ENCODE measurements at regions of chrX and their contacts with region 1.

Region 1: GRCh38 chrX:100768679-100769338 is 36.9 kb upstream of the SYTL4 start:
- DNase-seq: peak; percentile 42
- H3K27ac ChIP-seq: no peak overlapping the region
- CTCF ChIP-seq: peak; percentile 92

Region 2: GRCh38 chrX:100672966-100673365 is 95.8 kb before region 1 on chrX:
- CTCF ChIA-PET with region 1: interaction called, 24 read pairs
- POLR2A ChIA-PET with region 1: no interaction called
- DNase-seq: no peak
- H3K27ac ChIP-seq: no peak overlapping the region
- CTCF ChIP-seq: no peak

Region 3: DNA sequence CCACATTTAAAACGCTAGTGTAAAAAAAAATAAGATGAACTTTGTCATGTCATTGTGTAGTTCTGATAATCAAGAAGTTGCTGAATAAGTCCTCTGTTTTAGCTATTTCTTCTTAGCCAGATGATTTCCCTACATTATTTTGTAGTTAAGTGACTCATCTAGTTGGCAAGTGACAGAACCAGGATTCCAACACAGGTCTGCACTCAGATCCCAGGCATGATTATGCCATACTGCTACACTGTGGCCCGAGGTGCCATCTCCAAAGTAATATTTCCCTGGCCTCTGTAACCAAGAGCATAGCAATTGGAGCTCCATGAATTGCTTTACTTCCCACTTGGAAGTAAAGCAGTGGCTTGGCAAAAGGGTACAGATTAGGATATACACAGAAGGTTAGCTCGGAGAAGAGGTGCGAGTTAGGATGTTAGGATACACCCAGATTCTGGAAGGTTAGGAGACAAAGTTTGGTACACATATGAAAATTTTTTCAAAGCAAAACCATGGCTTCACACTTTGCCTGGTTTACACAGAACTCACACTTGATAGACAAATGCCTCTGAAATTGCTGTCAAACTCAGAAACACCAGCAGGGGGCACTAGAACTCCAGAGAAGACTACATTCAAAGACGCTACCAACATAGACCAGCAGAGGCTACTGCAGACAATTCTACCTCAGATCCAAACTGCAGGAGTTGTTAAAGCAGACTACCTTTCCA is 83.4 kb before region 1 on chrX:
- CTCF ChIA-PET with region 1: interaction called, 13 read pairs
- POLR2A ChIA-PET with region 1: no interaction called
- DNase-seq: peak; percentile 37
- H3K27ac ChIP-seq: no peak overlapping the region
- CTCF ChIP-seq: peak; percentile 42

Region 4: DNA sequence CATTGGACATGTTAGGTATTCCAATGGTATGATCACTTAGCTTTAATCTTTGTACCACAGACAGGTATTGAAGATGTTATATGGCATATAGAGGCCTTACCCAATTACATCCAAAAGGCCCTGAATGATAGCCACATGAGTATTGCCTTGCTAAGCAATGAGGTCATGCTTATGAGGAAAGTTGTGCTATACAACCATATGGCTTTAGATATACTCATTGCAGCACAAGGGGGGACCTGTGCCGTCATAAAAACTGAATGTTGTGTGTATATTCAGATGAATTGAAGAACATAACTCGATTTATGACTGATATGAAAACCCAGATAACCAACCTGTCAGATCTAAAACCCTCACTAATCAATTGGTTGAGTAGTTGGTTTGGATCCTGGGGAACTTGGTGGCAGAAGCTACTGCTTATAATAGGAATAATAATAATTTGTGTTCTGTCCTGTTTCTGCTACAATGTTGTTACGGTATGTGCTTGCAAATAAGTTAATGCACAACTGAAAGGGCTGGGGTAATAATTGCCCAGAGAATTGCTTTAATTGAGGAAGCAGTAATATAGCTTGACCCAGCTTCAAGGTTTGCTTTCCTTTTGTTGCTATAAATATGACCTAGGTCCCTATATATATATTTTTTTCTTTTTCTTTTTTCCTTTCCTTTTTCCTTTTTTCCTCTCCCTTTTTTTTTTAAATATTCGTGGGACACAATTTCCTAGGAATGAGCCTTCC is 29.8 kb after region 1 on chrX:
- CTCF ChIA-PET with region 1: no interaction called
- POLR2A ChIA-PET with region 1: no interaction called
- DNase-seq: no peak
- H3K27ac ChIP-seq: no peak overlapping the region
- CTCF ChIP-seq: no peak

Region 5: DNA sequence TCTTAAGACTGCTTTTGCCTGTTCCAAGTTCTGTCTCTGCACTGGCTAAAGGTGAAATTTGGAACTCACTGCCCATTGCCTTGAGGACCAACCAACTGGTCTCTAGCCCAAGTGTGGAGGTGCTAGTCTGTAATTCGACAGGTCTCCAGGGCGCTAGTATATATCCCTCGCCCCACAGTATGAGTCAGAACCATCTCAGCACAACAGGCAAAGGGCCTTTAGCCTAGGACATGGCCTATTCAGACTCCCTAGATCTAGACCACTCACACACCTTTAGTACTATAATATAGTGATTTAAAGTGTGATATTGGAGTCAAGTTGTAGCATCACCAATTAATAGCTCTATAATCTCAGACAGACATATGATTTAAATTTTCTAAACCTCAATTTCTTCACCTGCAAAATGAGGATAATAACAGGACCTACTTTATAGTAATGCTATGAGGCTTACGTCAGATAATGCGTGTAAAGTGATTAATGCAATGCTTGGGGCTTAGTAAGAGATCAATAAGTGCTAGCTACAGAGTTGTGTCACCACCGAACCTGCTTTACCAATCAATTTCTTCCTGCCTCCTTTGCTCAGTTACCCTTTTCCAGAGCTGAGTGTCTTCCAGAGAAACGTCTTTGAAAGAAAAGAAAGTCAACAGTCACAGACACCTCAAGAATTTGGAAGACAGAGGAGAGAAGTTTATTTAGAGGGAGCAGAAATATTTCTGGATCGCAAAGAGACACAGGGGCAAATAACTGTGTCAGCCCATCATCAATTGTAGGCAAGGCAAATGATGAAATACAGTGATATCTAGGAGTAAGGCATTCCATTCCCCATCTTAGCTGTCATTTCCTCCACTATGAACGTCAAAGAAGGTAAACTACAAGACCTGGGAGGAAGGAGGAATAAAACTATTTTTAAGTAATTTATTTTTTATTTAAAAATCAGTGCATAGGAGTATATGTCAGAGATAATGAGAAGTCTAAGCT is 103.1 kb after region 1 on chrX:
- CTCF ChIA-PET with region 1: no interaction called
- POLR2A ChIA-PET with region 1: no interaction called
- DNase-seq: no peak
- H3K27ac ChIP-seq: no peak overlapping the region
- CTCF ChIP-seq: no peak

Measured in RWPE1 (cell line).